ENCODE measurements at regions of chr16 and their contacts with region 1.

Region 1: DNA sequence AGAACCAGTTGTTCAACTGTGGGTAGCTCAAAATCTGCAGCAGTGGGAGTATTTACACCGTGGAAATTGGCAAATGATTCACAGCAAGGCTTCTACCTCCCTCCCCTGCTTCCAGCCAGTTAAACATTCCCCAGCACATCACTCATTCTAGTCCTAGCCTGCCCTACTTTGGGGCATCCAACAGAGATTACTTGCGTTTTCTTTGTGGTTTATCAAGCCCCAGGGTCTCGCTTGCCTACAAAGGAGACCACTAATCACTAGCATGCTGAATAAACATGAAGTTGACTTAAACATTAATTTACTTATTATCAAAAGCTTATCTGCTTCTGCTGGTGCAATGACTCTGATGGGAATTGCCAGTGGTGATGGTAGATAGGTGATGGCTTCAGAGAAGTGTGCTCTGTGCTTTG is 94.5 kb downstream of the MARF1 start:
- DNase-seq: no peak
- H3K4me3 ChIP-seq: no peak overlapping the region
- H3K27ac ChIP-seq: no peak overlapping the region; a peak in 1 of 4 replicates
- H3K4me1 ChIP-seq: no peaks in the 10 kb centered on the region; a peak in 1 of 4 replicates
- H3K27me3 ChIP-seq: no peaks in the 10 kb centered on the region
- CTCF ChIP-seq: no peak
- EP300 ChIP-seq: no peak
- RAD21 ChIP-seq: no peak

Region 2: DNA sequence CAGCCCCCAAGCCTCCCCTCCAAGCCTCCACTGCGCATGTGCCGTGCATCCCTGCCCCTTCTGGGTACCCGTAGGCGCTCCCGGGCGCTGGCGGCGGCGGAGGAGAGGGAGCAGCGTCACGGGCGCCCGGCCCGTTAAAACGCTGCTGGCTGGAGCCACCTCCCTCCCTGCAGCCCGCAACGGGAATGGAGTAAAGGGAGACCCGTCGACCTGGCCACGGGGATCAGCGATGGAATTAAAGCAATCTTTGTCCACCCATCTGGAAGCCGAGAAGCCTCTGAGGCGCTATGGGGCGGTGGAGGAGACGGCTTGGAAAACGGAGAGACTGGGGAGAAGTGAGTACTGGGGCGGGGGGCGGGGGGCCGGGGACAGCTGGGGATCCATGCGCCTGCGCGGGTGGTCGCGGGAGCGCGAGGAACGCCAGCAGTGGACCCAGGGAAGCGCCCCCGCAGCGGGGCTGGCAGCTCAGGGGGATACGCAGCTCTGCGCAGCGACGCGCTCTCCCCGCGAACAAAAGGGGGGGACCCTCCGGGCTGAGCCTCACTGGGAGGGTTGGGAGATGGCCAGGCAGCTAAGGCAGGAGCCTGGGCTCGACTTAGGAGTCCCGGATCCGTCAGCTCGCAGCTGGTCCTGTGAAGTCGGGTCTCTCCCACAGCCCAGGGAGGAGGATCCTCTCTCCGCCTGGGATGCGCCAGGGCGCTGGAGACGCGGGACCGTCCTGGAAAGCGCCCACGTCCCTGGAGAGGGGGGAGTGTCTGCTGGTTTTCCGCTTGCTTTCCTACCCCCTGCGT is 113.9 kb before region 1 on chr16 and contains the start of gene BMERB1:
- CTCF ChIA-PET with region 1: interaction called, 62 read pairs
- POLR2A ChIA-PET with region 1: no interaction called
- DNase-seq: peak; percentile 94
- H3K4me3 ChIP-seq: peak within 1 kb of the TSS; percentile 73 to 78
- H3K27ac ChIP-seq: peak within 1 kb of the TSS; percentile 55 to 85; a peak in 3 of 4 replicates
- H3K4me1 ChIP-seq: peaks cover 4 to 6% of the 10 kb centered on the region in 2 experiments; a peak in 1 of 4 replicates
- H3K27me3 ChIP-seq: no peaks in the 10 kb centered on the region
- CTCF ChIP-seq: no peak
- EP300 ChIP-seq: no peak
- RAD21 ChIP-seq: no peak
- polyA plus RNA-seq, gene BMERB1: 33.9 and 41.4 TPM in 2 replicates

Region 3: DNA sequence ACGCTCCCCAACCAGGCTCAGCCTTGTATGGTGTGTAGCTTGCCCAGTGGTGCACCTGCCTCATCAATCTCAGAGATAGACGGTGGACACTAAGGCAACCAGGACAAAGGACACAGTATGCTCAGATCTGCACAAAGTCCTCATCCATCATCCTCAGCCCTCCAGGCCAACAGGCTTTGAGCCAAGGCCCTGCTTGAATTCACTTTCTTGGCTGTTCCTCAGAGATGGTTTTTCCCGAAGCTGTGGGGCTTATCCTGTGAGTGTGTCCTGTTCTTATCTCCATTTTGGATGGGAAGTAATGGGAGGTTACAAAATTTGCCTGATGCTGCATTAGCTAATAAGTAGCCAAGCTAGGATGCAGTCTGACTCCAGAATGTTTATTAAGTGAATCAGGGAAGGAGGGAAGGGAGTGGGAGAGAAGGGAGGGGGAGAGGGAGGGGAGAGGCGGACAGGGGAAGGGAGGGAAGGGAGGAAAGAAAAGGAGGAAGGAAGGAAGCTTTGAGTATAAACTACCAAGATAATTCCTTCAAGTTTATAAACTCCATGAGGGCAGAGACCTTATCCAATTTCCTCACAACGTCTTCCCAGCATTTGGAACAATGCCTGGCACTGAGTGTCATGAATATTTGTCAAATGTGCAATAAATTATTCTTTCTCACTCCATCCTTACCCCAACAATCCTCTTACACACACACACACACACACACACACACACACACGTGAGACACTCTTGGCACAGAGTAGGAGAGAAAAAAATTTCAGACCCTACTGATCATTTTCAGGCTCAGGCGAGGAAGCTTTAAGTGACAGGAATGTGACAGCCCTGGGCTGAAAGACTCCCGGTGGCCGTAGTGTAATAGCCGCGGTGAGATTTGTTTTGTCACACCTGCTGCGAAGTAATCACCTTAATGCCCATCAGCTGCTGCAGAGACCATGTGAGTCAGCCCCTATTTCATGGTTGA is 29.8 kb before region 1 on chr16:
- CTCF ChIA-PET with region 1: interaction called, 29 read pairs
- POLR2A ChIA-PET with region 1: no interaction called
- DNase-seq: no peak
- H3K4me3 ChIP-seq: no peak overlapping the region
- H3K27ac ChIP-seq: no peak overlapping the region; a peak in 1 of 4 replicates
- H3K4me1 ChIP-seq: peaks cover 5 to 44% of the 10 kb centered on the region in 2 experiments; a peak in 2 of 4 replicates
- H3K27me3 ChIP-seq: no peaks in the 10 kb centered on the region
- CTCF ChIP-seq: no peak
- EP300 ChIP-seq: no peak
- RAD21 ChIP-seq: no peak

Region 4: DNA sequence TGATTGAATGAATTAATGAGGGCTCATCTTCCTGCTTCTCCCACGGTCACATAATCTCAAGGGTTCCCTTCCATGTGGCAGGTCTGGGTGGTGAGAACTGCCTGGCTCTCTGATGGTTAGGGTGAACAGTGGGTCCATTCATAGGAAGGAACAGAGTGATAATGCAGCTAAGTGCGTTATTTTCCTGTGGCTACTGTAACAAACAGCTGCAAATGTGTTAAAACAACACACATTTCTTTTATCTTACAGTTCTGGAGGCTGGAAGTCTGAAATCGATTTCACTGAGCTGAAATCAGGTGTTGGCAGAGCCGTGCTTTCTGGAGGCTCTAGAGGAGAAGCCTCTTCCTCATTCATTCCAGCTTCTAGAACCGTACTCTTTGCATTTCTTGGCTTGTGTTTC is 18.8 kb before region 1 on chr16:
- CTCF ChIA-PET with region 1: interaction called, 16 read pairs
- POLR2A ChIA-PET with region 1: no interaction called
- DNase-seq: no peak
- H3K4me3 ChIP-seq: no peak overlapping the region
- H3K27ac ChIP-seq: no peak overlapping the region
- H3K4me1 ChIP-seq: no peaks in the 10 kb centered on the region; a peak in 1 of 4 replicates
- H3K27me3 ChIP-seq: no peaks in the 10 kb centered on the region
- CTCF ChIP-seq: no peak
- EP300 ChIP-seq: no peak
- RAD21 ChIP-seq: no peak

Region 5: DNA sequence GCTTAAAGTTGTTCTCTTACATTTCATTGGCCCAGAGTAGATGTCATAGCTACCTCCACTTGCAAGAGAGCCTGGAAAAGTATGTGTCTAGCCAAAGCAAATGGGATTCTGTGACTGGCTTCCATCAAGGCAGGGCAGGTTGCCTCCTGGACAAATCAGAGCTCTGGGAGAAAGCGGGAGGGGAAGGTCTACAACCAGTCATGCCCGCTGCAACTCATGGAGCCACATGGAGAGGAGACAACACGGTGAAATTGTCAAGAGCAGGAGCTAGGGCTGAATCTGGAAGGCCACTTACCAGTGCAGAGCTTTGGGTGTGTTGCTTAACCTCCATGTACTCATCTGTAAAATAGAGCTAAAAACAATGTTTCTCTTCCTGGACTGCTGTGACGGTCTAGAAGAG is 10.7 kb after region 1 on chr16:
- CTCF ChIA-PET with region 1: interaction called, 24 read pairs
- POLR2A ChIA-PET with region 1: no interaction called
- DNase-seq: no peak
- H3K4me3 ChIP-seq: no peak overlapping the region
- H3K27ac ChIP-seq: no peak overlapping the region
- H3K4me1 ChIP-seq: no peaks in the 10 kb centered on the region; a peak in 1 of 4 replicates
- H3K27me3 ChIP-seq: no peaks in the 10 kb centered on the region
- CTCF ChIP-seq: no peak
- EP300 ChIP-seq: no peak
- RAD21 ChIP-seq: no peak

Region 6: GRCh38 chr16:15564604-15565339 is 16.3 kb after region 1 on chr16:
- CTCF ChIA-PET with region 1: interaction called, 24 read pairs
- POLR2A ChIA-PET with region 1: no interaction called
- DNase-seq: no peak
- H3K4me3 ChIP-seq: no peak overlapping the region
- H3K27ac ChIP-seq: no peak overlapping the region
- H3K4me1 ChIP-seq: no peaks in the 10 kb centered on the region
- H3K27me3 ChIP-seq: no peaks in the 10 kb centered on the region
- CTCF ChIP-seq: no peak
- EP300 ChIP-seq: no peak
- RAD21 ChIP-seq: no peak

Region 7: GRCh38 chr16:15620796-15621195 is 72.3 kb after region 1 on chr16:
- CTCF ChIA-PET with region 1: no interaction called
- POLR2A ChIA-PET with region 1: no interaction called
- DNase-seq: no peak
- H3K4me3 ChIP-seq: no peak overlapping the region
- H3K27ac ChIP-seq: no peak overlapping the region
- H3K4me1 ChIP-seq: peaks cover 0 to 10% of the 10 kb centered on the region in 2 experiments; a peak in 1 of 4 replicates
- H3K27me3 ChIP-seq: no peaks in the 10 kb centered on the region
- CTCF ChIP-seq: no peak
- EP300 ChIP-seq: no peak
- RAD21 ChIP-seq: no peak